ENCODE measurements at regions of chr1 and their contacts with region 1.

Region 1: DNA sequence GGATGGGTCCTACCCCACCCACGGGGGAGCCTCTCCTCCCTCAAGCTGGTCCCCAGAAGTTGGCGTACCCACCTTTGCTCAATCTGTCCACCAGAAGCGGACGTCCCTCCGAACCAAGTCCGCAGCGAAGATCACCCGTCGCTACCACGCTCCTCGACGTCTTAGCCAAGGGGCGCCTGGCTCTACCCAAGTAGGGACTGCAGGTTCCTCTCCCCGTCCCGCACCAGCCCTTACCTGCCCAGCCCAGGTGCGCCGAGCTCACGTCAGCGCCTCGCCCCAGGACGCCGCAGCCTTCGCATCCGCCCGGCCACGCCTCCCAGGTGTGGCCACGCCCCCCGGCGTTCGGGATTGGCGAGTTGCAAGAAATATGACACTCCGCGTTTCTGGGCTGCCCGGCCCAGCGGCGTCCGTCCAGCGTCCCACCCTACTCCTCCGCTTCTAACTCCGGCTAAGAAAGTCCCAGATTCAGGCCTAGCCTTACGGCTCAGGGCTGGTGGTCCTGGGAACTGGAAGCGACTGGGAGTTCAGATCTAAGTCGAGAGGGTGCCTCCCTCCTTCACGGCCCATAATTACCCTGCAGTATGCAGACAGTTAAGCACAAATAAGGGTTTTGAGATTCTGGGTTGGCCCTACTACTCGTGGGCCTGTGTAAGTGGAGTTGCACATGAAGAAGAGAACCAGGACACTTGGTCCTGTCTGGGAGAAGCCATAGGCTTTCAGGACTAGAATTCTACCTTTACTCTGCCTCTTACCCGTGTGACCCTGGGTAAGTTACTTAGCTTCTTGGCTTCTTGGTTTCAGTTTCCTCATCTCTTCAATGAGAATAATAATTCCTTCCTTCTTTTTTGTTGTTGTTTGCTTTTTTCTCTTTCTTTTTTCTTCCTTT is at the start of gene IRF6:
- DNase-seq: peak; percentile 33 to 48
- ATAC-seq: peak; percentile 54 to 83; a peak in 4 of 6 replicates
- H3K4me3 ChIP-seq: peak within 1 kb of the TSS; percentile 32; the same call in 2 of the 3 replicates
- H3K27ac ChIP-seq: no peak within 1 kb of the TSS
- H3K4me1 ChIP-seq: peaks cover 10% of the 10 kb centered on the region
- CTCF ChIP-seq: no peak
- EP300 ChIP-seq: no peak
- POLR2A ChIP-seq: no peak
- RAD21 ChIP-seq: no peak
- polyA plus RNA-seq, gene IRF6: 0.22 and 0.25 TPM in 2 replicates

Region 2: GRCh38 chr1:209733409-209734192 is 72.5 kb before region 1 on chr1:
- CTCF ChIA-PET with region 1: no interaction called
- POLR2A ChIA-PET with region 1: no interaction called
- DNase-seq: no peak
- ATAC-seq: no peak
- H3K4me3 ChIP-seq: no peak overlapping the region
- H3K27ac ChIP-seq: no peak overlapping the region
- H3K4me1 ChIP-seq: no peaks in the 10 kb centered on the region
- CTCF ChIP-seq: no peak
- EP300 ChIP-seq: no peak
- POLR2A ChIP-seq: no peak
- RAD21 ChIP-seq: no peak

Region 3: GRCh38 chr1:209787551-209787950 is 18.6 kb before region 1 on chr1:
- CTCF ChIA-PET with region 1: interaction called, 14 read pairs
- POLR2A ChIA-PET with region 1: interaction called, 5 read pairs
- DNase-seq: peak in 1 of 2 experiments; percentile 10
- ATAC-seq: no peak
- H3K4me3 ChIP-seq: no peak overlapping the region
- H3K27ac ChIP-seq: no peak overlapping the region
- H3K4me1 ChIP-seq: peaks cover 17% of the 10 kb centered on the region; the same call in 2 of the 3 replicates
- CTCF ChIP-seq: no peak
- EP300 ChIP-seq: no peak
- POLR2A ChIP-seq: no peak
- RAD21 ChIP-seq: no peak